ENCODE measurements at regions of chr5 and their contacts with region 1.

Region 1: GRCh38 chr5:40688127-40688761 is 8.5 kb downstream of the PTGER4 start:
- DNase-seq: peak; percentile 80 to 85
- H3K4me3 ChIP-seq: no peak overlapping the region
- H3K27ac ChIP-seq: peak overlapping the region in 1 of 3 donors; percentile 9
- H3K4me1 ChIP-seq: peaks cover 0 to 4% of the 10 kb centered on the region in 2 donors
- H3K27me3 ChIP-seq: no peaks in the 10 kb centered on the region
- CTCF ChIP-seq: peak; percentile 38 to 87 (median 81)
- POLR2A ChIP-seq: no peak

Region 2: GRCh38 chr5:39580702-39581453 is 1107.4 kb before region 1 on chr5:
- intact Hi-C with region 1: loop called (anchors 10 kb)
- DNase-seq: no peak
- H3K4me3 ChIP-seq: no peak overlapping the region
- H3K27ac ChIP-seq: no peak overlapping the region
- H3K4me1 ChIP-seq: no peaks in the 10 kb centered on the region
- H3K27me3 ChIP-seq: no peaks in the 10 kb centered on the region
- CTCF ChIP-seq: no peak
- POLR2A ChIP-seq: no peak

Region 3: DNA sequence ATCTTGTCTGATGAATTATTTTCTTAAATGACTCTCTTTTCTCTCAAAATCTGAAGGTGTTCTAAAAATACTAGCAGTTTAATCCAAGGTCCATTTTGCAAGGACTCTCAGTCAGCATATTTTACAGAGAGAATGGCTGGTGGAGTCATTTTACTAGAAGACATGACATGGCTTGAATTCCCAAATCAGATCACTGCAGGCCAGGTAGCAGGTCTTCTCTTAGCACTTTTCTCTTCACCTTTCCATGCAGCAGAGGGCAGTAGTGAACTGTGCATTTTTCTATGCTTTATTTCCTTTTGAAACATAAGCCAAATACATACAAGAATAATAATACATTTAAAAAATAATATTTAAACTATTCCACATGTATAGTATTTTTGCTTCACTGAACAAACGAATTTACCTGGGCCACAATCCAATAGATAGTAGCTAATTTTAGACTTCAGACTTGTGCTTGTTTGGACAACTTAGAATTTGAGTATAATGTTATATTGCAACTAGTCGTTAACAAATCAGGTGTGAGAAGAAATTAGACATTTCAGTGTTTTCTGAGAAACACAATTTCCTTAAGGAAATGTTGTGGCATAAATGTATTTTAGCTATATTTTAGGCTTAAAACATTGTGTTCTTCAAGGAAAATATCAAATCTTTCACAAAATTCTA is 974.1 kb before region 1 on chr5:
- intact Hi-C with region 1: loop called (anchors 10 kb)
- DNase-seq: peak; percentile 30 to 37
- H3K4me3 ChIP-seq: no peak overlapping the region
- H3K27ac ChIP-seq: no peak overlapping the region
- H3K4me1 ChIP-seq: no peaks in the 10 kb centered on the region
- H3K27me3 ChIP-seq: no peaks in the 10 kb centered on the region
- CTCF ChIP-seq: peak; percentile 31 to 78 (median 66)
- POLR2A ChIP-seq: no peak

Region 4: DNA sequence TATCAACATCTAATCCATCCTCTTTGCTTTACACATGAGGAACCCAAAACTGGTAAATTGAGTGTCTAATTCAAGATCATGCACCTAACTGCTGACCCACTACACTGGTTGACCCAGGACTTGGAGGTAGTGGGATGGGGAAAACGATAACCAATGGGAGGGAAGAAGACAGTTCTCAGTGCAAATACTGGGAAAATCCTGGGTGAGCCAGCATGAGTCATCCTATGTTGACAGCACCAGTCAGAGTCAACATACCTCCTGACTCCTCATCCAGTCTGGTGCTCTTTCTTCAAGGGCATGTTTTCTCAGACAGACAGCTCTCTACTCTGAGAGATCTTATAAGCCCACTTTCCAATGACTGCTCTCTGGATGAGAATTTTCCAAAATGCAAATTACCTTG is 241.3 kb before region 1 on chr5:
- intact Hi-C with region 1: no loop called
- DNase-seq: no peak
- H3K4me3 ChIP-seq: no peak overlapping the region
- H3K27ac ChIP-seq: no peak overlapping the region
- H3K4me1 ChIP-seq: no peaks in the 10 kb centered on the region
- H3K27me3 ChIP-seq: no peaks in the 10 kb centered on the region
- CTCF ChIP-seq: no peak
- POLR2A ChIP-seq: no peak